WTC11 (cell line): ENCODE measurements at regions of chr1 and their contacts with region 1.

Region 1: DNA sequence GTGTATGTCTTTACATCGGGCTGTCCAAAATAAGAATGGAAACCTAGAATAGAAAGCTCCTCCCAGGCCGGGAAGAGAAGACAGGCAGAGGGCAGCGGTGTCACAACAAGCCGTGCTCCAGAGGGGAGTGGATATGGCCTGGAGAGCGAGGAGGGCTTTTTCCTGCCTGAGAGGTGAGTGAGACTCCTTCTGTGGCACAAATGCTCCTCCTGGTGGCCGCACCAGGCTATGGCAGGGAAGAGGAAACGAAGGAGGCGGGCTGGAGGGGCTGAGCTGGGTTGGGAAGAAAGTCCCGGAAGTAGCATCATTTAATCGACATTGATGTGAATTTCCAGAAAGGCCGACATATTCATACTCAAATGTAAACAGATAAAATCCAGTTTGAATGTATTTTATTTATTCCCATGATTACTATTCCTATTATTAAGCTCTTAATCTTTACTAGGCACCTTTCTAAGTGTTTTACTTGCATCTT is 54.7 kb downstream of the MEF2D start:
- DNase-seq: peak; percentile 92
- ATAC-seq: peak; percentile 93
- H3K4me3 Mint-ChIP-seq: no peak overlapping the region
- H3K27ac Mint-ChIP-seq: no peak overlapping the region
- H3K4me1 Mint-ChIP-seq: peaks cover 10% of the 10 kb centered on the region
- H3K27me3 Mint-ChIP-seq: peaks cover 43% of the 10 kb centered on the region
- CTCF ChIP-seq: peak; percentile 92

Region 2: GRCh38 chr1:156356875-156357534 is 88.8 kb before region 1 on chr1:
- CTCF ChIA-PET with region 1: interaction called, 18 read pairs
- POLR2A ChIA-PET with region 1: no interaction called
- DNase-seq: peak; percentile 93
- ATAC-seq: peak; percentile 96
- H3K4me3 Mint-ChIP-seq: peak overlapping the region; percentile 79
- H3K27ac Mint-ChIP-seq: no peak overlapping the region
- H3K4me1 Mint-ChIP-seq: peaks cover 12% of the 10 kb centered on the region
- H3K27me3 Mint-ChIP-seq: peaks cover 24% of the 10 kb centered on the region
- CTCF ChIP-seq: peak; percentile 86

Region 3: GRCh38 chr1:156383023-156383422 is 62.8 kb before region 1 on chr1:
- CTCF ChIA-PET with region 1: interaction called, 401 read pairs
- POLR2A ChIA-PET with region 1: interaction called, 8 read pairs
- DNase-seq: peak; percentile 92
- ATAC-seq: peak; percentile 95
- H3K4me3 Mint-ChIP-seq: no peak overlapping the region
- H3K27ac Mint-ChIP-seq: no peak overlapping the region
- H3K4me1 Mint-ChIP-seq: peaks cover 21% of the 10 kb centered on the region
- H3K27me3 Mint-ChIP-seq: peaks cover 24% of the 10 kb centered on the region
- CTCF ChIP-seq: peak; percentile 87

Region 4: GRCh38 chr1:156421062-156421938 is 24.5 kb before region 1 on chr1:
- CTCF ChIA-PET with region 1: interaction called, 96 read pairs
- POLR2A ChIA-PET with region 1: interaction called, 3 read pairs
- DNase-seq: peak; percentile 93
- ATAC-seq: peak; percentile 88
- H3K4me3 Mint-ChIP-seq: peak overlapping the region; percentile 76
- H3K27ac Mint-ChIP-seq: no peak overlapping the region
- H3K4me1 Mint-ChIP-seq: peaks cover 34% of the 10 kb centered on the region
- H3K27me3 Mint-ChIP-seq: peaks cover 100% of the 10 kb centered on the region
- CTCF ChIP-seq: no peak

Region 5: DNA sequence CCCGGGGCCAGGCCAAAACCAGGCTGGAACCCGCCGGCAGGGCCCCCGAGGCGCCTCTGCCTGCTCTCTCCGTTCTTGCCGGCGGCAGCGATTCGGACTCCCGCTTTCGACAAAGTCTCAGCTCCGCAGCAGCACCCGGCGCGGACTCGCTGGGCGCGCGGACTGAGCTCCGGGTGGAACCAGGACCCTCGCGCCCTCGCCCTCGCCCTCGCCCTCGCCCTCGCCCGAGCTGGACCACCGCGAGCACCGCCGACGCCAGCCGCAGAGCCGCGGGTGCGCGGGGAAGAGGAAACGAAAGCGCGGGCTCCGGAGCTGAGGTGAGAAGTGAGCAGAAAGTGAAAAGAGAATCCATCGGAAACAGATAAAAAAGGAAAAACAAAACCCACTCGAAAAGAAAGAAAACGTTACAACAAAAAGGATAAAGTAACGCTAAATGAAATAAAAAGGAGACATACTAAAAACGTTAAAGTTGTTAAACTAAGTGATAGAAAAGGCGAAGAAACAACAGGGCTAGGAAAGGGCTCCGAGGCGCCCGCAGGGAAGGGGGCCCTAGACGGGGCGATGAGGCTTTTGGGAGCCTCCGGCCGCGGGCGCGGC is 10.2 kb before region 1 on chr1:
- CTCF ChIA-PET with region 1: interaction called, 28 read pairs
- POLR2A ChIA-PET with region 1: interaction called, 3 read pairs
- DNase-seq: no peak
- ATAC-seq: no peak
- H3K4me3 Mint-ChIP-seq: peak overlapping the region; percentile 66
- H3K27ac Mint-ChIP-seq: no peak overlapping the region
- H3K4me1 Mint-ChIP-seq: peaks cover 71% of the 10 kb centered on the region
- H3K27me3 Mint-ChIP-seq: peaks cover 100% of the 10 kb centered on the region
- CTCF ChIP-seq: no peak

Region 6: GRCh38 chr1:156465747-156466365 is 20.0 kb after region 1 on chr1:
- CTCF ChIA-PET with region 1: interaction called, 41 read pairs
- POLR2A ChIA-PET with region 1: no interaction called
- DNase-seq: peak; percentile 66
- ATAC-seq: peak; percentile 75
- H3K4me3 Mint-ChIP-seq: no peak overlapping the region
- H3K27ac Mint-ChIP-seq: peak overlapping the region; percentile 56
- H3K4me1 Mint-ChIP-seq: peaks cover 42% of the 10 kb centered on the region
- H3K27me3 Mint-ChIP-seq: no peaks in the 10 kb centered on the region
- CTCF ChIP-seq: no peak